GM12878 (cell line): ENCODE measurements at regions of chr16 and their contacts with region 1.

Region 1: GRCh38 chr16:11667824-11668622 is at the start of gene SNN:
- DNase-seq: no peak
- ATAC-seq: peak; percentile 70
- H3K4me3 ChIP-seq: peak within 1 kb of the TSS; percentile 67
- H3K27ac ChIP-seq: peak within 1 kb of the TSS; percentile 88
- H3K4me1 ChIP-seq: peaks cover 45% of the 10 kb centered on the region
- H3K27me3 ChIP-seq: no peaks in the 10 kb centered on the region
- CTCF ChIP-seq: no peak
- EP300 ChIP-seq: no peak
- POLR2A ChIP-seq: peak; percentile 59; the same call in 1 of the 2 replicates
- RAD21 ChIP-seq: no peak
- polyA plus RNA-seq, gene SNN: 2.2 to 5.2 TPM

Region 2: GRCh38 chr16:11333711-11334110 is 334.3 kb before region 1 on chr16:
- CTCF ChIA-PET with region 1: no interaction called
- POLR2A ChIA-PET with region 1: no interaction called
- RAD21 ChIA-PET with region 1: no interaction called
- SMC1A ChIA-PET with region 1: no interaction called
- in situ Hi-C with region 1: no loop called
- intact Hi-C with region 1: no loop called
- DNase-seq: no peak
- ATAC-seq: no peak
- H3K4me3 ChIP-seq: no peak overlapping the region
- H3K27ac ChIP-seq: no peak overlapping the region
- H3K4me1 ChIP-seq: peaks cover 12% of the 10 kb centered on the region
- H3K27me3 ChIP-seq: no peaks in the 10 kb centered on the region
- CTCF ChIP-seq: no peak
- EP300 ChIP-seq: no peak
- POLR2A ChIP-seq: no peak
- RAD21 ChIP-seq: no peak

Region 3: GRCh38 chr16:11682655-11683096 is 14.7 kb after region 1 on chr16:
- CTCF ChIA-PET with region 1: interaction called, 12 read pairs
- POLR2A ChIA-PET with region 1: interaction called, 75 read pairs
- RAD21 ChIA-PET with region 1: interaction called, 14 read pairs
- SMC1A ChIA-PET with region 1: interaction called, 43 read pairs
- in situ Hi-C with region 1: no loop called
- intact Hi-C with region 1: no loop called
- DNase-seq: no peak
- ATAC-seq: peak; percentile 39
- H3K4me3 ChIP-seq: peak overlapping the region; percentile 0; the same call in 1 of the 2 replicates
- H3K27ac ChIP-seq: peak overlapping the region; percentile 67
- H3K4me1 ChIP-seq: peaks cover 83% of the 10 kb centered on the region
- H3K27me3 ChIP-seq: no peaks in the 10 kb centered on the region
- CTCF ChIP-seq: no peak
- EP300 ChIP-seq: no peak
- POLR2A ChIP-seq: no peak
- RAD21 ChIP-seq: no peak

Region 4: GRCh38 chr16:11774065-11774626 is 106.1 kb after region 1 on chr16:
- CTCF ChIA-PET with region 1: no interaction called
- POLR2A ChIA-PET with region 1: no interaction called
- RAD21 ChIA-PET with region 1: no interaction called
- SMC1A ChIA-PET with region 1: no interaction called
- in situ Hi-C with region 1: no loop called
- intact Hi-C with region 1: no loop called
- DNase-seq: no peak
- ATAC-seq: peak; percentile 80
- H3K4me3 ChIP-seq: peak overlapping the region; percentile 48; the same call in 1 of the 2 replicates
- H3K27ac ChIP-seq: peak overlapping the region; percentile 48
- H3K4me1 ChIP-seq: peaks cover 54% of the 10 kb centered on the region
- H3K27me3 ChIP-seq: no peaks in the 10 kb centered on the region
- CTCF ChIP-seq: no peak
- EP300 ChIP-seq: no peak
- POLR2A ChIP-seq: no peak
- RAD21 ChIP-seq: no peak

Region 5: GRCh38 chr16:11851294-11852091 is 183.5 kb after region 1 on chr16 and contains the start of gene RSL1D1:
- CTCF ChIA-PET with region 1: no interaction called
- POLR2A ChIA-PET with region 1: no interaction called
- RAD21 ChIA-PET with region 1: no interaction called
- SMC1A ChIA-PET with region 1: no interaction called
- in situ Hi-C with region 1: no loop called
- intact Hi-C with region 1: no loop called
- DNase-seq: peak; percentile 87
- ATAC-seq: peak; percentile 85
- H3K4me3 ChIP-seq: peak within 1 kb of the TSS; percentile 99
- H3K27ac ChIP-seq: peak within 1 kb of the TSS; percentile 66
- H3K4me1 ChIP-seq: no peaks in the 10 kb centered on the region; the same call in 1 of the 2 replicates
- H3K27me3 ChIP-seq: no peaks in the 10 kb centered on the region
- CTCF ChIP-seq: no peak
- EP300 ChIP-seq: no peak
- POLR2A ChIP-seq: peak; percentile 99
- RAD21 ChIP-seq: no peak
- polyA plus RNA-seq, gene RSL1D1: 288 to 367 TPM

Region 6: GRCh38 chr16:12229759-12230594 is 562.0 kb after region 1 on chr16:
- CTCF ChIA-PET with region 1: no interaction called
- POLR2A ChIA-PET with region 1: no interaction called
- RAD21 ChIA-PET with region 1: no interaction called
- SMC1A ChIA-PET with region 1: no interaction called
- in situ Hi-C with region 1: no loop called
- intact Hi-C with region 1: no loop called
- DNase-seq: no peak
- ATAC-seq: no peak
- H3K4me3 ChIP-seq: no peak overlapping the region
- H3K27ac ChIP-seq: no peak overlapping the region
- H3K4me1 ChIP-seq: peaks cover 2% of the 10 kb centered on the region; the same call in 1 of the 2 replicates
- H3K27me3 ChIP-seq: no peaks in the 10 kb centered on the region
- CTCF ChIP-seq: no peak
- EP300 ChIP-seq: no peak
- POLR2A ChIP-seq: no peak
- RAD21 ChIP-seq: no peak